ENCODE measurements at regions of chr20 and their contacts with region 1.

Region 1: DNA sequence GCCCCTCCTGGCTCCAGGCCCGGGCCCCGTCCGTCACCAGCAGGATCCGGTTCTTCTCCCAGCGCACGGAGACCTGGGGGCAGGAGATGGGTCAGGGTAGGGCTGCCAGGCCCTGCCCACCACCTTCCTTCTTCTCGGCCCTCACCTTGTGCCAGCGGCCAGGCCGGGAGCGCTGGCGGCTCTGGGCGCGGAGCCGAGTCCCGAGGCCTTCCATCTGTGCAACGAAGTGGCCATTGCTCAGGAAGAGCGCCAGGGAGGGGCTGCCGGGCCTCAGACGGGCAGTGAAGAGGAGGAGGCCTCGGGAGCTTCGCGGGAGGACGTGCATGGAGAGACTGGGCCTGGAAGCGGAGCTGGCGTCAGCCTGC is 7.9 kb downstream of the ADRM1 start:
- DNase-seq: no peak
- ATAC-seq: no peak
- H3K4me3 ChIP-seq: no peak overlapping the region
- H3K27ac ChIP-seq: no peak overlapping the region
- H3K4me1 ChIP-seq: no peaks in the 10 kb centered on the region
- H3K27me3 ChIP-seq: no peaks in the 10 kb centered on the region

Region 2: DNA sequence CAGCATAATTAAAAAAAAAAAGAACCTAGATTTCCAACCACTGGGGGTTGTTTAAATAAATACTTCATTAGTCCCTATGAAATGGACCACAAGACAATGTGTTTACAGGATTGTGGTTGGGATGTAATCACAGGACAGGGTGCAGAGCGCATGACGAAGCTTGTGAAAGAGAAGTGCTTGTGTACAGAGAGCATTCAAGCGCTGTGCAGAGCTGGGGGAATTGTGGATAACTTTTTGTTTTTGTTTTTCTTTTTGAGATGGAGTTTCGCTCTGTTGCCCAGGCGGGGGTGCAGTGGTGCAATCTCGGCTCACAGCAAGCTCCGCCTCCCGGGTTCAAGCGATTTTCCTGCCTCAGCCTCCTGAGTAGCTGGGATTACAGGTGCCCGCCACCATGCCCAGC is 34.0 kb after region 1 on chr20:
- intact Hi-C with region 1: loop called in 1 of 2 experiments (anchors 5 kb)
- DNase-seq: no peak
- ATAC-seq: no peak
- H3K4me3 ChIP-seq: no peak overlapping the region
- H3K27ac ChIP-seq: no peak overlapping the region
- H3K4me1 ChIP-seq: no peaks in the 10 kb centered on the region
- H3K27me3 ChIP-seq: no peaks in the 10 kb centered on the region